ENCODE measurements at regions of chr4 and their contacts with region 1.

Region 1: DNA sequence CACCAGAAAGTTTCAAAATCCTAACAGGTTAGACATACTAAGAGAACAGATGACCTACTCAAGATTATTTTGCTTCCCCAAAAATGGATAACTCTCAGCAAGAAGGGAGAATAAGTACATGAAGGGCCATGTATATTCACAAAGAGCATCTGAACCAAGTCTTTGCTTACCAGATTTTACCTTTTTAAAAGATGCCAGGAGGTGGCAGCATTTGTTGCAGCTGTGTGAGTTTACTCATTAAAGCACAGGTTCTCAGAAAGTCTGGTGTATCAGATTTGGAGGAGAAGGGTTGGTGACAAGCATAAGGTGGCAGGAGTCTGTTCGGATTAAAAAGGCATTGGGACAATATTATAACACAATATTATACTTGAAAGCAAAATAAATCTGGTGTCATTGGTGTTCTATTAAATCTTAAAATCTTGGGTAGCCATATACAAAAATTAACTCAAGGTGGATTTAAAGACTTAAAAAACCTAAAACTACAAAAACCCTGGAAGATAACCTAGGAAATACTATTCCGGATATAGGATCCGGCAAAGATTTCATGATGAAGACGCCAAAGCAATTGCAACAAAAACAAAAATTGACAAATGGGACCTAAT is 51.3 kb upstream of the NFKB1 start:
- DNase-seq: peak in 13 of 14 experiments; percentile 14 to 84 (median 36)
- ATAC-seq: peak; percentile 78
- H3K4me3 ChIP-seq: no peak overlapping the region
- H3K4me3 Mint-ChIP-seq: no peak overlapping the region
- H3K27ac ChIP-seq: no peak overlapping the region
- H3K27ac Mint-ChIP-seq: no peak overlapping the region
- H3K4me1 ChIP-seq: no peaks in the 10 kb centered on the region
- H3K4me1 Mint-ChIP-seq: peaks cover 12% of the 10 kb centered on the region
- H3K27me3 ChIP-seq: no peaks in the 10 kb centered on the region
- H3K27me3 Mint-ChIP-seq: no peaks in the 10 kb centered on the region
- CTCF ChIP-seq: peak; percentile 87

Region 2: GRCh38 chr4:101238706-101239105 is 1211.1 kb before region 1 on chr4:
- CTCF ChIA-PET with region 1: no interaction called
- POLR2A ChIA-PET with region 1: no interaction called
- intact Hi-C with region 1: no loop called
- DNase-seq: no peak
- ATAC-seq: no peak
- H3K4me3 ChIP-seq: no peak overlapping the region
- H3K4me3 Mint-ChIP-seq: no peak overlapping the region
- H3K27ac ChIP-seq: no peak overlapping the region
- H3K27ac Mint-ChIP-seq: no peak overlapping the region
- H3K4me1 ChIP-seq: no peaks in the 10 kb centered on the region
- H3K4me1 Mint-ChIP-seq: peaks cover 43% of the 10 kb centered on the region
- H3K27me3 ChIP-seq: no peaks in the 10 kb centered on the region
- H3K27me3 Mint-ChIP-seq: no peaks in the 10 kb centered on the region
- CTCF ChIP-seq: no peak

Region 3: DNA sequence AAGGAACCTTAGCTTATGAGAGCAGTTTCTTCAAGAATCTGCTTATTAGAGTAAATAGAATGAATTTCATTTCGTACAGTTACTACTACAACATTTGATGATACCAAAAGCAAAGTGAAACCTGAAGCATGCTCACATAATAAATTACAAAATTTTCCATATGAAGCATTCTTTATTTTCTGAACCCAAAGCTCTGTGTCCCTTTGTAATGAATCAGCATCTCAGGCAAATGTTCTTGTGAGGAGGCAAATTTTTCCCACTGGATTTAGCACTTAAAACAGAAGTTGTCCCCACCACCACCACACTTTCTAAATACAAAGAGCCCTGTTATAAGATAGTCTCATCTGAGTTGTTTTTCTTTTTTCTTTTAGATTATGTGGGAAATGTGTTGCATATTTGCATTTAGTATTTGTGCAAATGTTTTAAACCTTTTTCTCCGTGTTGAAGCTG is 19.4 kb before region 1 on chr4:
- CTCF ChIA-PET with region 1: interaction called, 6 read pairs
- POLR2A ChIA-PET with region 1: no interaction called
- intact Hi-C with region 1: loop called in 1 of 2 experiments (anchors 2 kb)
- DNase-seq: peak in 1 of 14 experiments; percentile 13
- ATAC-seq: no peak
- H3K4me3 ChIP-seq: peak overlapping the region; percentile 66
- H3K4me3 Mint-ChIP-seq: peak overlapping the region; percentile 87
- H3K27ac ChIP-seq: no peak overlapping the region
- H3K27ac Mint-ChIP-seq: peak overlapping the region; percentile 74
- H3K4me1 ChIP-seq: no peaks in the 10 kb centered on the region
- H3K4me1 Mint-ChIP-seq: peaks cover 6% of the 10 kb centered on the region
- H3K27me3 ChIP-seq: no peaks in the 10 kb centered on the region
- H3K27me3 Mint-ChIP-seq: no peaks in the 10 kb centered on the region
- CTCF ChIP-seq: no peak

Region 4: DNA sequence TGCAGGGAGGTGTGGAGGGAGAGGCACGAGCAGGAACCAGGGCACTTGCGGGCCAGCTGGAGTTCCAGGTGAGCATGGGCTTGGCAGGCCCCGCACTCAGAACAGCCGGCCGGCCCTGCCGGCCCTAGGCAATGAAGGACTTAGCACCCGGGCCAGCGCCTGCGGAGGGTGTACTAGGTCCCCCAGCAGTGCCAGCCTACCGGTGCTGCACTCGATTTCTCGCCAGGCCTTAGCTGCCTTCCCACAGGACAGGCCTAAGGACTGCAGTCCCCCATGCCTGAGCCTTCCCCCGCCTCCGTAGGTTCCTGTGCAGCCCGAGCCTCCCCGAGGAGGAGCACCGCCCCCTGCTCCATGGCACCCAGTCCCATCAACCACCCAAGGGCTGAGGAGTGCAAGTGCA is 33.3 kb after region 1 on chr4:
- CTCF ChIA-PET with region 1: no interaction called
- POLR2A ChIA-PET with region 1: no interaction called
- intact Hi-C with region 1: no loop called
- DNase-seq: no peak
- ATAC-seq: no peak
- H3K4me3 ChIP-seq: no peak overlapping the region
- H3K4me3 Mint-ChIP-seq: no peak overlapping the region
- H3K27ac ChIP-seq: no peak overlapping the region
- H3K27ac Mint-ChIP-seq: no peak overlapping the region
- H3K4me1 ChIP-seq: no peaks in the 10 kb centered on the region
- H3K4me1 Mint-ChIP-seq: peaks cover 5% of the 10 kb centered on the region
- H3K27me3 ChIP-seq: no peaks in the 10 kb centered on the region
- H3K27me3 Mint-ChIP-seq: no peaks in the 10 kb centered on the region
- CTCF ChIP-seq: no peak

Region 5: GRCh38 chr4:102543030-102543928 is 93.4 kb after region 1 on chr4:
- CTCF ChIA-PET with region 1: no interaction called
- POLR2A ChIA-PET with region 1: interaction called, 4 read pairs
- intact Hi-C with region 1: loop called in 1 of 2 experiments (anchors 5 kb)
- DNase-seq: no peak
- ATAC-seq: no peak
- H3K4me3 ChIP-seq: no peak overlapping the region
- H3K4me3 Mint-ChIP-seq: no peak overlapping the region
- H3K27ac ChIP-seq: no peak overlapping the region
- H3K27ac Mint-ChIP-seq: no peak overlapping the region
- H3K4me1 ChIP-seq: peaks cover 3% of the 10 kb centered on the region
- H3K4me1 Mint-ChIP-seq: peaks cover 64% of the 10 kb centered on the region
- H3K27me3 ChIP-seq: no peaks in the 10 kb centered on the region
- H3K27me3 Mint-ChIP-seq: no peaks in the 10 kb centered on the region
- CTCF ChIP-seq: no peak

Region 6: DNA sequence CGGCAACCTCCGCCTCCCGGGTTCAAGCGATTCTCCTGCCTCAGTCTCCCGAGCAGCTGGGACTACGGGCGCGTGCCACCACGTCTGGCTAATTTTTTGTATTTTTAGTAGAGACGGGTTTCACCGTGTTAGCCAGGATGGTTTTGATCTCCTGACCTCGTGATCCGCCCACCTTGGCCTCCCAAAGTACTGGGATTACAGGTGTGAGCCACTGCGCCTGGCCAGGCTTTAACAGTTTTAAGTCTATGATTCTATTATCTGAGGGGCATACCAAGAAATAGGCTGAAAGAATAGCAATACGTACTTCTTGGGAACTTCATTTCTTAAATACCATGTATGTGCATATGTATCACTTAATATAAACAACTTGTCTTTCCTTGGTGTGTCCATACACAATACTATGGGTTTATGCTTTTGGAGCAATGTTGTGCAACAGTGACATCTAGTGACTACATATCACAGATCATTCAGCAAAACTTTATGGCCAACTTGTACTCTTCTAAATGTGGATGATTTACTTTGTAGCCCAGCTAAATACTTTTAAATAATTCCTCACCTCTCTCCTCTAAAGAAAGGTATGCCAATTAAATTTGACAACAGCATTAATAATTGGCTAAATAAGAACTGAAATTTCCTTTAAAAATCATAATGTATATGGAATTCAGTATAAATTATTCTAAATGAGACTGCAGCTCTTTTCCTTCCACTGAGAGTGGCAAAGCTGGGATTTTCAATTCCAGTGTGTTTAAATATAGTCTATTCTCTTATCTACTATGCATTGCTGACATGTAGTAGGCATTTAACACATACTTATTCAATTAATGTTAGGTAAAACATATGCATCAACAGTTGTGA is 559.2 kb after region 1 on chr4:
- CTCF ChIA-PET with region 1: interaction called, 4 read pairs
- POLR2A ChIA-PET with region 1: no interaction called
- intact Hi-C with region 1: loop called (anchors 1 kb)
- DNase-seq: peak in 4 of 14 experiments; percentile 33 to 84 (median 76)
- ATAC-seq: peak; percentile 96
- H3K4me3 ChIP-seq: no peak overlapping the region
- H3K4me3 Mint-ChIP-seq: no peak overlapping the region
- H3K27ac ChIP-seq: no peak overlapping the region
- H3K27ac Mint-ChIP-seq: no peak overlapping the region
- H3K4me1 ChIP-seq: no peaks in the 10 kb centered on the region
- H3K4me1 Mint-ChIP-seq: no peaks in the 10 kb centered on the region
- H3K27me3 ChIP-seq: no peaks in the 10 kb centered on the region
- H3K27me3 Mint-ChIP-seq: no peaks in the 10 kb centered on the region
- CTCF ChIP-seq: peak; percentile 77

Region 7: GRCh38 chr4:103091601-103092223 is 641.9 kb after region 1 on chr4:
- CTCF ChIA-PET with region 1: no interaction called
- POLR2A ChIA-PET with region 1: no interaction called
- intact Hi-C with region 1: loop called in 1 of 2 experiments (anchors 5 kb)
- DNase-seq: peak in 10 of 14 experiments; percentile 4 to 80 (median 32)
- ATAC-seq: peak; percentile 68
- H3K4me3 ChIP-seq: no peak overlapping the region
- H3K4me3 Mint-ChIP-seq: no peak overlapping the region
- H3K27ac ChIP-seq: no peak overlapping the region
- H3K27ac Mint-ChIP-seq: no peak overlapping the region
- H3K4me1 ChIP-seq: no peaks in the 10 kb centered on the region
- H3K4me1 Mint-ChIP-seq: peaks cover 15% of the 10 kb centered on the region
- H3K27me3 ChIP-seq: no peaks in the 10 kb centered on the region
- H3K27me3 Mint-ChIP-seq: no peaks in the 10 kb centered on the region
- CTCF ChIP-seq: peak; percentile 71